ENCODE measurements at regions of chr2 and their contacts with region 1.

Region 1: GRCh38 chr2:63578767-63579166 is 9.5 kb downstream of the WDPCP start:
- DNase-seq: no peak
- H3K27ac ChIP-seq: no peak overlapping the region
- CTCF ChIP-seq: no peak

Region 2: GRCh38 chr2:63665846-63666475 is 87.2 kb after region 1 on chr2:
- CTCF ChIA-PET with region 1: interaction called, 10 read pairs
- POLR2A ChIA-PET with region 1: no interaction called
- DNase-seq: no peak
- H3K27ac ChIP-seq: no peak overlapping the region
- CTCF ChIP-seq: no peak